Vagina (tissue), 2 donors: ENCODE measurements at regions of chr2 and their contacts with region 1.

Region 1: DNA sequence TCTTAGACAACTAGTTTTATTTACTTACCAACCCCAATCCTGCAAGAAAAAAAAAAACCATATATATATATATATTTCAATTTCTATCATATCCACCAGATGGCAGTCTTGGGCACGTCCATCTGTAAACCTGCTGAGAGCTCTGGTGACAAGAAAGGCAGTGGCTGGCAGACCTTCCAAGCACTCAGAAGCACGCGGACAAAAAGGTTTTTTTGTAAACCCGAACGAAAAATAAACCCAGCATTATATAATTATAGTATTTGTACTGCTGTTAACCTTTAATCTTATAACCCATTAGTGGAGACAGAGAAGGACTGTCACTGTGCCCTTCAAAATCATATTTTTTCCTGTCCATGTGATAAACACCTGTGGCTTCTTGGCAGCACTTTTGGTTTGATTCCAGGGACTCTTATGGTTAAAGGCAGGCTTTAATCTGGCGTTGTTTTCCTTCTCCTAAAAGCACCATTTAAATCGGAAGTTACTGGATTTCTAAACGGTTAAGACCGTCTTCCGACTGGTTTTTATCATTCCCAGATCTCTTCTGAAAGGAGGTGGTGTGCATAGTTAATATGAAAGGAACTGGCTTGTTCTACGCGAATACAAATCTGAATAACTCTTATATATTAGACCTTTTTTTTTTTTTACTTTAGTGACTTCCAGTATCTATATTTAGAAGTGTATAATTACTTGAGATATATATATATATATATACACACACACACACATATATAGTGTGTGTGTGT is 31.0 kb upstream of the SLC3A1 start:
- DNase-seq: no peak
- H3K4me3 ChIP-seq: peak overlapping the region; percentile 28
- H3K27ac ChIP-seq: no peak overlapping the region
- H3K4me1 ChIP-seq: peaks cover 18% of the 10 kb centered on the region
- H3K27me3 ChIP-seq: no peaks in the 10 kb centered on the region
- CTCF ChIP-seq: peak in 2 of 3 experiments; percentile 19 to 39
- POLR2A ChIP-seq: no peak

Region 2: GRCh38 chr2:44291281-44292248 is 47.3 kb after region 1 on chr2:
- intact Hi-C with region 1: loop called (anchors 10 kb)
- DNase-seq: no peak
- H3K4me3 ChIP-seq: no peak overlapping the region
- H3K27ac ChIP-seq: no peak overlapping the region
- H3K4me1 ChIP-seq: no peaks in the 10 kb centered on the region
- H3K27me3 ChIP-seq: no peaks in the 10 kb centered on the region
- CTCF ChIP-seq: peak in 1 of 3 experiments; percentile 25
- POLR2A ChIP-seq: no peak